ENCODE measurements at regions of chr11 and their contacts with region 1.

Region 1: GRCh38 chr11:119728651-119729580 is at the start of gene NECTIN1:
- DNase-seq: peak; percentile 76
- ATAC-seq: peak; percentile 89
- H3K4me3 ChIP-seq: peak within 1 kb of the TSS; percentile 62 to 80 (median 73)
- H3K27ac ChIP-seq: peak within 1 kb of the TSS; percentile 13
- H3K4me1 ChIP-seq: peaks cover 35% of the 10 kb centered on the region
- H3K27me3 ChIP-seq: peaks cover 4 to 23% of the 10 kb centered on the region in 2 experiments; a peak in 4 of 5 replicates
- CTCF ChIP-seq: peak; percentile 97
- EP300 ChIP-seq: no peak
- POLR2A ChIP-seq: peak; percentile 72 to 76
- RAD21 ChIP-seq: peak; percentile 97
- total RNA-seq, gene NECTIN1: 4.1 and 7.3 TPM in 2 replicates

Region 2: DNA sequence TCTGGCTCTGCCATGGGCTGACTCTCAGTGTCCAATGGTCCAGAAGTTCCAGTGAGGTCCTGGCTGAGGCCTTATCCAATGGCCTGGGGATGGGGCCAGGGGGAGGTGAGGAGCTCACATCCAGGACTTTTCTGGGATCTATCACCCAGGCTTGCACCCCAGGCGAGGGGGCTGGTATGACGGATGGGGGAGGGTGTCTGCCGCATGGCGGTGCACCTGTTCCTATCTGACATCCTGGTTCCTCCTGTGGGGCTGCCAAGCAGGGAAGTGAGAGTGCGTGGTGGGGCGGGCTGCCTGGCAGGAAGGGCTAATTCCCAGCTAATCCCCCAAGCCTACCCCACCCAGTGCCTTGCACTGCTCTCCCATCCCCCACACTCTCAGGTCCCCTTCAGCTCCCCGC is 102.0 kb before region 1 on chr11:
- CTCF ChIA-PET with region 1: no interaction called
- POLR2A ChIA-PET with region 1: no interaction called
- in situ Hi-C with region 1: loop called (anchors 5 kb)
- intact Hi-C with region 1: no loop called
- DNase-seq: no peak
- ATAC-seq: no peak; the same call in 2 of the 3 replicates
- H3K4me3 ChIP-seq: no peak overlapping the region; a peak in 1 of 6 replicates
- H3K27ac ChIP-seq: no peak overlapping the region
- H3K4me1 ChIP-seq: peaks cover 50% of the 10 kb centered on the region
- H3K27me3 ChIP-seq: peaks cover 4 to 30% of the 10 kb centered on the region in 2 experiments
- CTCF ChIP-seq: no peak
- EP300 ChIP-seq: no peak
- POLR2A ChIP-seq: no peak
- RAD21 ChIP-seq: no peak

Region 3: DNA sequence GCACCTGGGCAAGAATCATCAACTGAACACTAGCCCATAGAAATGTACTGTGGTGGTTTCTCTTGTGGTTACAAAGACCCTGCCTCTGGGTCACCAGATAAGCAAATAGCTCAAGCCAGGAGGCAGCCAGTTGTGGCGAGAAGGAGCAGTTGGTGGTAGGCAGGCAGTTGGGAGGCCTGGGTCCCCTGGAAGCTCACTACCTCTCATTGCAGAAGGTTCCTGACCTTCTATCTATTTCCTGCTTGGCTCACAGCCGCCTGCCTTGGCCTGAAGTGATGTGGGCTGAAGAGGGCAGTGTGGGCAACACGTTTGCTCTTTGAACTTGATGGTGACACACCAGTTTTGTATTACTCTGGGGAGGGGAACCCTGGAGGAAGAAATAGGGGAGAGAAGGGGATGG is 34.6 kb before region 1 on chr11:
- CTCF ChIA-PET with region 1: interaction called, 5 read pairs
- POLR2A ChIA-PET with region 1: interaction called, 9 read pairs
- in situ Hi-C with region 1: no loop called
- intact Hi-C with region 1: loop called (anchors 2 kb)
- DNase-seq: peak; percentile 72
- ATAC-seq: peak; percentile 67
- H3K4me3 ChIP-seq: no peak overlapping the region
- H3K27ac ChIP-seq: no peak overlapping the region
- H3K4me1 ChIP-seq: peaks cover 67% of the 10 kb centered on the region
- H3K27me3 ChIP-seq: no peaks in the 10 kb centered on the region
- CTCF ChIP-seq: peak; percentile 82
- EP300 ChIP-seq: no peak
- POLR2A ChIP-seq: no peak
- RAD21 ChIP-seq: 0 out of 2 replicates have a peak, but pooled peaks have one; percentile 17

Region 4: GRCh38 chr11:119712459-119713358 is 16.2 kb before region 1 on chr11:
- CTCF ChIA-PET with region 1: interaction called, 3 read pairs
- POLR2A ChIA-PET with region 1: interaction called, 14 read pairs
- in situ Hi-C with region 1: no loop called
- intact Hi-C with region 1: no loop called
- DNase-seq: no peak
- ATAC-seq: peak; percentile 53
- H3K4me3 ChIP-seq: peak overlapping the region; percentile 20 to 63 (median 32); a peak in 4 of 6 replicates
- H3K27ac ChIP-seq: peak overlapping the region; percentile 45
- H3K4me1 ChIP-seq: peaks cover 75% of the 10 kb centered on the region
- H3K27me3 ChIP-seq: no peaks in the 10 kb centered on the region
- CTCF ChIP-seq: 0 out of 2 replicates have a peak, but pooled peaks have one; percentile 10
- EP300 ChIP-seq: no peak
- POLR2A ChIP-seq: peak in 1 of 2 experiments; percentile 42; a peak in 1 of 4 replicates
- RAD21 ChIP-seq: no peak

Region 5: GRCh38 chr11:119759324-119759723 is 30.4 kb after region 1 on chr11:
- CTCF ChIA-PET with region 1: no interaction called
- POLR2A ChIA-PET with region 1: no interaction called
- in situ Hi-C with region 1: no loop called
- intact Hi-C with region 1: no loop called
- DNase-seq: no peak
- ATAC-seq: no peak
- H3K4me3 ChIP-seq: no peak overlapping the region
- H3K27ac ChIP-seq: no peak overlapping the region
- H3K4me1 ChIP-seq: no peaks in the 10 kb centered on the region
- H3K27me3 ChIP-seq: peaks cover 6 to 38% of the 10 kb centered on the region in 2 experiments; a peak in 3 of 5 replicates
- CTCF ChIP-seq: no peak
- EP300 ChIP-seq: no peak
- POLR2A ChIP-seq: no peak
- RAD21 ChIP-seq: no peak

Region 6: DNA sequence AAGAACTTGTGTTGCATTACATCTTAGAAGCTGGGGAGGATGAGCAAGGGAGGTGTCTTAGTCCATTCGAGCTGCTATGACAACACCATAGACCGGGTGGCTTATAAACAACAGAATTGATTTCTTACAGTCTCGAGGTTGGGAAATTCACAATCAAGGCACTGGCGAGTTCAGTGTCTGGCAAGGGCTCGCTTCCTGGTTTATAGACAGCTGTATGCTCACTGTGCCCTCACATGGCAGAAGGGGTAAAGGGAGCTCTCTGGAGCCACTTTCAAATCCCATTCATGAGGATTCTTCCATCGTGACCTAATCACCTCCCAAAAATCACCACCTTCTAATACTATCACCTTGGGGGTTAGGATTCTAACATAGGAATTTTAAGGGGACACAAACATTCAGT is 150.1 kb after region 1 on chr11:
- CTCF ChIA-PET with region 1: no interaction called
- POLR2A ChIA-PET with region 1: no interaction called
- in situ Hi-C with region 1: no loop called
- intact Hi-C with region 1: no loop called
- DNase-seq: no peak
- ATAC-seq: no peak
- H3K4me3 ChIP-seq: no peak overlapping the region
- H3K27ac ChIP-seq: no peak overlapping the region
- H3K4me1 ChIP-seq: no peaks in the 10 kb centered on the region
- H3K27me3 ChIP-seq: peaks cover 0 to 32% of the 10 kb centered on the region in 2 experiments; a peak in 4 of 5 replicates
- CTCF ChIP-seq: no peak
- EP300 ChIP-seq: no peak
- POLR2A ChIP-seq: no peak
- RAD21 ChIP-seq: no peak